B cell (primary cell): ENCODE measurements at regions of chr7 and their contacts with region 1.

Region 1: DNA sequence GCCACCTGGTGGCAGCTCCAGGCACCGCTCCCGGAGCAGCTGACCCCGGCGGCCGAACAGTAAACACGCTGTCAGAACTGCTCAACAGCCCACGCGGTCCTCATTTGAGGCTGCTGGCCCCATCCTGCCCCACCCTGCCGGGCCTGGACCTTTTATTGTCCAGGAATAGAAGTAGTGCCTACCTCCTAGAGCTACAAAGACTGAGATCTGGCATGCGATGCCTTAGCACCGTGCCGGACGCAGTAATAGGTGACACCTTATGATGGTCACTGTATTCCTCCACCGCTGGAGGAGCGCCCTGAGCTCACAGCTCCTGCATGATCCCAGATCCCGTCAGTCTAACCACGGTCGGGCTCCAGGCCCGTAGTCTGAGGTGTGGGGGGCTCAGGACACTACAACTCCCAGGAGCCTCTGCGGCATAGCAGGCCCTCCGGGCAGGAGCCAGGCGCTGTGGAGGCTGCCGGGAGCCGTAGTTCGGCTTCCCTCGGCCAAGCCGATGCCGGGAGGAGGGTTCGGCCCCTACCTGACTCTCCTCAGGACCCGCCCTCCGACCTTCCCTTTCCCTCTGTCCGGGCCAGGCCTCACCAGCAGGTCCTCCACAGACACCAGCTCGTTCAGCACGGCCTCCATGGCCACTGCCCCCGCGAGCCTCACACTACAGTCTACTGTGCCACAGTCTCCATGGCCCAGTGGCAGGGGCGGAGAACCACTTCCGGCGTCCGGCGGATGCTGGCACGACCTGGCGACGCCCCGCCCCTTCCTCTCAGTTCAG is at the start of gene FIS1:
- DNase-seq: peak; percentile 97
- ATAC-seq: peak; percentile 93
- H3K4me3 ChIP-seq: peak within 1 kb of the TSS; percentile 95 to 100 (median 99)
- H3K4me3 Mint-ChIP-seq: peak within 1 kb of the TSS; percentile 98
- H3K27ac ChIP-seq: peak within 1 kb of the TSS; percentile 91 to 97
- H3K27ac Mint-ChIP-seq: peak within 1 kb of the TSS; percentile 97
- H3K4me1 ChIP-seq: peaks cover 13 to 31% of the 10 kb centered on the region in 2 donors
- H3K4me1 Mint-ChIP-seq: peaks cover 41% of the 10 kb centered on the region
- H3K27me3 ChIP-seq: no peaks in the 10 kb centered on the region
- H3K27me3 Mint-ChIP-seq: no peaks in the 10 kb centered on the region
- CTCF ChIP-seq: peak; percentile 98
- total RNA-seq, gene FIS1: 95.5 and 105 TPM in 2 replicates

Region 2: GRCh38 chr7:100874577-100875355 is 369.8 kb before region 1 on chr7 and contains the start of gene SRRT:
- CTCF ChIA-PET with region 1: no interaction called
- POLR2A ChIA-PET with region 1: no interaction called
- intact Hi-C with region 1: loop called (anchors 1 kb)
- DNase-seq: peak; percentile 99
- ATAC-seq: peak; percentile 96
- H3K4me3 ChIP-seq: peak within 1 kb of the TSS; percentile 73 to 99 (median 89)
- H3K4me3 Mint-ChIP-seq: peak within 1 kb of the TSS; percentile 97
- H3K27ac ChIP-seq: peak within 1 kb of the TSS; percentile 91 to 96
- H3K27ac Mint-ChIP-seq: peak within 1 kb of the TSS; percentile 95
- H3K4me1 ChIP-seq: peaks cover 22 to 32% of the 10 kb centered on the region in 2 donors
- H3K4me1 Mint-ChIP-seq: peaks cover 37% of the 10 kb centered on the region
- H3K27me3 ChIP-seq: no peaks in the 10 kb centered on the region
- H3K27me3 Mint-ChIP-seq: no peaks in the 10 kb centered on the region
- CTCF ChIP-seq: no peak
- total RNA-seq, gene SRRT: 209 and 224 TPM in 2 replicates

Region 3: GRCh38 chr7:101085162-101085987 is 159.2 kb before region 1 on chr7 and contains the start of gene TRIM56:
- CTCF ChIA-PET with region 1: no interaction called
- POLR2A ChIA-PET with region 1: no interaction called
- intact Hi-C with region 1: loop called (anchors 1 kb)
- DNase-seq: peak; percentile 83
- ATAC-seq: peak; percentile 97
- H3K4me3 ChIP-seq: peak within 1 kb of the TSS; percentile 88 to 98 (median 92)
- H3K4me3 Mint-ChIP-seq: peak within 1 kb of the TSS; percentile 98
- H3K27ac ChIP-seq: peak within 1 kb of the TSS; percentile 86 to 96
- H3K27ac Mint-ChIP-seq: peak within 1 kb of the TSS; percentile 98
- H3K4me1 ChIP-seq: peaks cover 16 to 29% of the 10 kb centered on the region in 2 donors
- H3K4me1 Mint-ChIP-seq: peaks cover 22% of the 10 kb centered on the region
- H3K27me3 ChIP-seq: no peaks in the 10 kb centered on the region
- H3K27me3 Mint-ChIP-seq: peaks cover 3% of the 10 kb centered on the region
- CTCF ChIP-seq: no peak
- total RNA-seq, gene TRIM56: 76.1 and 85.7 TPM in 2 replicates

Region 4: DNA sequence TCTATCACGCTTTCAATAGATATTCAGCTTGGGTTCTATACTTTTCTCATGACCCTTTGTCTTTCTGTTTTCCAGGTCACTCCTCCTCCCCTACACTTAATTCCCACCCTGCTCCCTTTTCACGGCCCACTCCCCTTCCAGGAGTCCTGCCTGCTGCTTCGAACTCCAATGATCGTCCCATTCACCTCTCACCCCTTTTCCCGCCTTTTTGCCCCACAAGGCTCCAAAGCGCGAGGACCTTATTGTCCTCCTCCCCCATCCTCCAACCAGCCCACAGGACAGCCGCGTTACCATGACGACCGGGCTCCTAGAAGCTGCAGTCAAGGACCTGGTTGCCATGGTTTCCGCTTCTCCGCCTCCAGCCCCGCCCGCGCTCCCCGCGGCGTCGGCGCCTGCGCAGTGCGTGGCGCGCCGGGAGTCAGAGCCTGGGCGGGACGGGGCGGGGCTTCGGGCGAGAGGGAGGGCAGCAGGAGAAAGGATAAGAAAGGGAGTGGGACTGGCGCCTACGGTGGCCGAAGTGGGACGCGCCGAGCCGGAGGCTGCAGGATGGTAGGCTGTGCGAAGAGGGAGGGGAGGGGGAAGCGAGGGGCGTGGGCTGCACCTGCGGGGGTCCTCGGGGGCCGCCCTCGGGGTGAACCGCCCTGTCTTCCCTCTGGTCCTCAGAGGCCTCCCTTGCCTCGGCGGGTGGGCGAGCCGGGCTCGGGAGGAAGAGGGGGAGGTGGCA is 90.4 kb before region 1 on chr7 and contains the start of gene AP1S1:
- CTCF ChIA-PET with region 1: interaction called, 4 read pairs
- POLR2A ChIA-PET with region 1: no interaction called
- intact Hi-C with region 1: loop called (anchors 2 kb)
- DNase-seq: peak; percentile 95
- ATAC-seq: peak; percentile 90
- H3K4me3 ChIP-seq: peak within 1 kb of the TSS in 4 of 5 experiments; percentile 53 to 71 (median 63)
- H3K4me3 Mint-ChIP-seq: peak within 1 kb of the TSS; percentile 86
- H3K27ac ChIP-seq: no peak within 1 kb of the TSS
- H3K27ac Mint-ChIP-seq: peak within 1 kb of the TSS; percentile 67
- H3K4me1 ChIP-seq: peaks cover 10 to 16% of the 10 kb centered on the region in 2 donors
- H3K4me1 Mint-ChIP-seq: peaks cover 12% of the 10 kb centered on the region
- H3K27me3 ChIP-seq: no peaks in the 10 kb centered on the region
- H3K27me3 Mint-ChIP-seq: peaks cover 9% of the 10 kb centered on the region
- CTCF ChIP-seq: no peak
- total RNA-seq, gene AP1S1: 10.3 and 11.4 TPM in 2 replicates

Region 5: DNA sequence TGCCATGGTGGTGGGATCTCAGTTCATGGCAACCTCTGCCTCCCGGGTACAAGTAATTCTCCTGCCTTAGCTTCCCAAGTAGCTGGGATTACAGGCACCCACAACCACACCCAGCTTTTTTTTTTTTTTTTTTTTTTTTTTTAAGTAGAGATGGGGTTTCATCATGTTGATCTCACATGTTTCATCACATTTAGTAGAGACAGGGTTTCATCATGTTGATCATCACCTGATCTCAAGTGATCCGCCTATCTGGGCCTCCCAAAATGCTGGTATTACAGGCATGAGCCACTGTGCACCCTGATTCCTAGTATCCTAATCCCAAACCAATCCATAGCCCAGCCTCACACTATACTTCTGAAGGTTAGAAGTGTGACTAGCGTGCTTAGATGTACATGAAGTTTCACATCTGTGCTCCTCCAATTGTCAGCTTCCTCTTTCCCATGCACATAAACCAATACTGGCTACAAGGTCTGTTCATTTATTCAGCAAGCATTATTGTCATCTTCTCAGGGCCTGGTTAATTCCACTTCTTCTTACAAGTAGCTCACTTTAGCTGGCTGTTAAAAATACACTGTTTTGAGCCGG is 57.6 kb before region 1 on chr7:
- CTCF ChIA-PET with region 1: interaction called, 19 read pairs
- POLR2A ChIA-PET with region 1: interaction called, 7 read pairs
- intact Hi-C with region 1: loop called (anchors 1 kb)
- DNase-seq: no peak
- ATAC-seq: no peak
- H3K4me3 ChIP-seq: no peak overlapping the region
- H3K4me3 Mint-ChIP-seq: no peak overlapping the region
- H3K27ac ChIP-seq: no peak overlapping the region
- H3K27ac Mint-ChIP-seq: no peak overlapping the region
- H3K4me1 ChIP-seq: no peaks in the 10 kb centered on the region
- H3K4me1 Mint-ChIP-seq: peaks cover 4% of the 10 kb centered on the region
- H3K27me3 ChIP-seq: peaks cover 0 to 16% (median 5%) of the 10 kb centered on the region in 4 experiments
- H3K27me3 Mint-ChIP-seq: peaks cover 26% of the 10 kb centered on the region
- CTCF ChIP-seq: no peak

Region 6: GRCh38 chr7:101287032-101287431 is 42.5 kb after region 1 on chr7:
- CTCF ChIA-PET with region 1: interaction called, 21 read pairs
- POLR2A ChIA-PET with region 1: interaction called, 5 read pairs
- intact Hi-C with region 1: no loop called
- DNase-seq: no peak
- ATAC-seq: no peak
- H3K4me3 ChIP-seq: no peak overlapping the region
- H3K4me3 Mint-ChIP-seq: no peak overlapping the region
- H3K27ac ChIP-seq: no peak overlapping the region
- H3K27ac Mint-ChIP-seq: no peak overlapping the region
- H3K4me1 ChIP-seq: peaks cover 0 to 13% of the 10 kb centered on the region in 2 donors
- H3K4me1 Mint-ChIP-seq: peaks cover 19% of the 10 kb centered on the region
- H3K27me3 ChIP-seq: peaks cover 0 to 6% (median 2%) of the 10 kb centered on the region in 4 experiments
- H3K27me3 Mint-ChIP-seq: peaks cover 10% of the 10 kb centered on the region
- CTCF ChIP-seq: no peak

Region 7: DNA sequence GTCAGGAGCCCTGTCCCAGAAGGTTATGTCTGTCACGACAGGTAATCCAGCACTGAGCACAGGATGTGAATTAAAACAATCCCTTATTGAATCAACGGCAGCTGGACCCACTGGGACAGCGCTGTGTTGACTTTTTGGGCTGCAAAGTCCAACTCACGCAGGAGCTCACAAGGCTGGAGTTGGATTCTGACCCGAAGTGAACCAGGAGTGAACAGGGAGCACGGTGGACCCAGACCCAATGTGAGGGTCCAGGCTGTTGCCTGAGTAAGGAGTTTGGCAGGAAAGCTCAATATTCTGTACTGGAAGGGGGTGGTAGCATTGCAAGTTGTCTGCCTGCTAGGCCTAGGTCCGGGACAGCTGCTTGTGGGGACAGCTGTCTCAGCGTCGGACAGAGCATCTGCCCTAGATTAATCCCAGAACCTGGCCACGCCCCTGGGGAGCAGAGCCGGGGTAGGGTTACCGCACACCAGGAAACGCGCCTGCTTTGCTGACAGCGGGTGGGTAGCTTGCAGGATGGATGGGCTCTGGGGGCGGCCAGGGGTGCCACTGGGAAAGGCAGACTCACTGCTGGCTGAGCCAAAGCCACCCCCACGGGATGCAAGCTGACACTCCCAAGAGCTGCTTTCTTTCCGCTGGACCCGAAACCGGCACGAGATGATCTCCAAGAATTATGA is 142.1 kb after region 1 on chr7:
- CTCF ChIA-PET with region 1: no interaction called
- POLR2A ChIA-PET with region 1: no interaction called
- intact Hi-C with region 1: no loop called
- DNase-seq: peak; percentile 12
- ATAC-seq: no peak
- H3K4me3 ChIP-seq: no peak overlapping the region
- H3K4me3 Mint-ChIP-seq: no peak overlapping the region
- H3K27ac ChIP-seq: no peak overlapping the region
- H3K27ac Mint-ChIP-seq: no peak overlapping the region
- H3K4me1 ChIP-seq: peaks cover 30 to 32% of the 10 kb centered on the region in 2 donors
- H3K4me1 Mint-ChIP-seq: peaks cover 27% of the 10 kb centered on the region
- H3K27me3 ChIP-seq: peaks cover 0 to 6% (median 1%) of the 10 kb centered on the region in 4 experiments
- H3K27me3 Mint-ChIP-seq: no peaks in the 10 kb centered on the region
- CTCF ChIP-seq: no peak